ENCODE measurements at regions of chr17 and their contacts with region 1.

Region 1: GRCh38 chr17:56715613-56716357 is 117.9 kb downstream of the C17orf67 start:
- DNase-seq: peak; percentile 87
- ATAC-seq: peak; percentile 92
- H3K4me3 Mint-ChIP-seq: no peak overlapping the region
- H3K27ac Mint-ChIP-seq: no peak overlapping the region
- H3K4me1 Mint-ChIP-seq: peaks cover 28% of the 10 kb centered on the region
- H3K27me3 Mint-ChIP-seq: no peaks in the 10 kb centered on the region
- CTCF ChIP-seq: peak; percentile 88

Region 2: DNA sequence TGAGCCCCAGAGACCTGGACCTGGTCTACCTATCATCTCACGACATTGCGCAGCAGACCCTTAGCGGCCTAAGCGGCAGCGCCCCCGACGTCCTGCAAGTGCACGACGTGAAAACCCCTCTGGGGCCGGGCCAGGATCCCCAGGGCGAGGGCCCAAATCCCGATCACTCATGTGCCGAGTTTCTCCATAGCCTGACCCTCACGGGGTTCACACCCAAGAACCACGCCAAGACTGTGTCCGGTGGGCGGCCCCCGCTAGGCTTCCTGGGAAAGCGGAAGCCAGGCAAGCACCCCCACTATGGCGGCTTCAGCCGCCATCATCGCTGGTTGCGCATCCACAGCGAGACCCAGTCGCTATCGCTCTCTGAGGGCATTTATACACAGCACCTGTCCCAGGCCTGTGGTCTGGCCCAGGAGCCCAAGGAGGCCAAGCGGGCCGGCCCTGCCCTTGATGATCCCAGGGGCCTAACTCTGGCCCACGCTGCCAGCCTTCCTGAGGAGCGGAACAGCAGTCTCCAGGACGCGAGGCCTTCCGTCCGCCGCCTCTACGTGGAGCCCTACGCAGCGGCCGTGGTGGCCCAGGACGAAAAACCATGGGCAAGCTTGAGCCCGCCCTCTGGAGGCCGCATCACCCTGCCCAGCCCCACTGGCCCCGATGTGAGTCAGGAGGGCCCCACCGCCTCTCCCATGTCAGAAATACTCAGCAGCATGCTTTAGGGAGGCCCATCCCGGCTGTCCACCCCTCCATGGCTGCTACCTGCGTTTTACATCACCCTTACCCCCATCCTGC is 205.0 kb before region 1 on chr17:
- CTCF ChIA-PET with region 1: interaction called, 23 read pairs
- POLR2A ChIA-PET with region 1: interaction called, 4 read pairs
- DNase-seq: no peak
- ATAC-seq: peak; percentile 51
- H3K4me3 Mint-ChIP-seq: no peak overlapping the region
- H3K27ac Mint-ChIP-seq: no peak overlapping the region
- H3K4me1 Mint-ChIP-seq: no peaks in the 10 kb centered on the region
- H3K27me3 Mint-ChIP-seq: no peaks in the 10 kb centered on the region
- CTCF ChIP-seq: no peak

Region 3: GRCh38 chr17:56629531-56630075 is 86.2 kb before region 1 on chr17:
- CTCF ChIA-PET with region 1: interaction called, 10 read pairs
- POLR2A ChIA-PET with region 1: no interaction called
- DNase-seq: peak; percentile 62
- ATAC-seq: peak; percentile 99
- H3K4me3 Mint-ChIP-seq: no peak overlapping the region
- H3K27ac Mint-ChIP-seq: no peak overlapping the region
- H3K4me1 Mint-ChIP-seq: peaks cover 12% of the 10 kb centered on the region
- H3K27me3 Mint-ChIP-seq: no peaks in the 10 kb centered on the region; the same call in 1 of the 2 replicates
- CTCF ChIP-seq: no peak

Region 4: DNA sequence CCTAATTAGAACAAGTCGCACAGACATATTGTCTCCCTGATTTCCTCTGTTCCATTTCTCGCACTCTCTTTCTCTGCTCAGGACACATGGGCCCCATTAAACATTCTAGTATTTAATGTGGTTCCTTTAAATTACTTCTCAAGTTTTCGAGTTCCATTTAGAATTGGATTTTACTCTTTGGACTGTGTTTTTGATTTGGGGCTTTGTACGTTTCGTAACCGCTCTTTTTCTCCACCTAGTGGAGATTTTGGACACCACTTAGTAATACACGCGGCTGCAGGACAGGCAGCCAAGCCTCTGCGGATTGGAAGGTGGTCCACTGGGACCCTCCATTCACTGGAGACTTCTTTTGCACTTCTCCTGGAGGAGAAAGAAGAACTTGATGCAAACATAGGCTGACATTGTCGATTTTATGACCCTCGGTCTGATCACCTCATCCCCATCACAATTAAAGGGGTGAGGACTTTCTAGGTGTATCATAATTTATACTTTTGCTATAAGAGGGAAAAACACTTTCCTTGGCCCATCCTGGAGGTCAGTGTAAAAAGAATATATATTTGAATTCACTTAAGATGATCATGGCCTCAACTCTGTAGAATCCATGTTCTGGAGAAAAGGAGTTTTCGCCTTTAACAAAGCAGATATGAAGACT is 36.5 kb before region 1 on chr17:
- CTCF ChIA-PET with region 1: interaction called, 47 read pairs
- POLR2A ChIA-PET with region 1: no interaction called
- DNase-seq: no peak
- ATAC-seq: peak; percentile 75
- H3K4me3 Mint-ChIP-seq: peak overlapping the region; percentile 85
- H3K27ac Mint-ChIP-seq: no peak overlapping the region
- H3K4me1 Mint-ChIP-seq: peaks cover 9% of the 10 kb centered on the region
- H3K27me3 Mint-ChIP-seq: no peaks in the 10 kb centered on the region; the same call in 1 of the 2 replicates
- CTCF ChIP-seq: peak; percentile 41; the same call in 1 of the 2 replicates

Region 5: DNA sequence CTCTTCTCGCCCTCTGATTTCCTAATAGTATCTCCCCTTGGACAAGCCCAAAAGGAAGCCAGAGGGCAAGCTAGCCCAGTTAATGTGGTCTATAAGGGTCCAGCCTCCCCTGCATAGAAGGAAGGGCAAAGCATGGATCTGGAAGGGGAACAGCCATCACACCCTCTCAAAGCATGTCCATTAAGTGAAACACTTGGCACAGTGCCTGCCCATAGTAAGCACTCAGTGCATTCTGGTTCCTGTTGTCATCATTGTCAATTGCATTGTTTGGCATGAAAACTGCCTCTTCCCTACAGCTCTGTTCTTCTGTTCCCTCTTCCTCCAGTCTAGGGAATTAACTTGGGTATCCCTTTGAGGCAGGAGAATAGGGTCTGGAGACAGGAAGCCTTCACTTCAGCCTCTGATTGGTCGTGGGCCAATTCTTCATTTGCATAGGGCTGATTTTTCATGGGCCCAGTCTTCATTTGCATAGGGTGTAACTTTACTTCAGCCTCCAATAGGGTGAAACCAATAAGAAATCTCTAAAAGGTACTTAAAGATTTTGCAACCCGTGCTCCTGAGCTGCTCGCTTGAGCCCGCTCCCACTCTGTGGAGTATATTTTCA is 36.6 kb after region 1 on chr17:
- CTCF ChIA-PET with region 1: interaction called, 12 read pairs
- POLR2A ChIA-PET with region 1: no interaction called
- DNase-seq: no peak
- ATAC-seq: peak; percentile 33
- H3K4me3 Mint-ChIP-seq: no peak overlapping the region
- H3K27ac Mint-ChIP-seq: no peak overlapping the region
- H3K4me1 Mint-ChIP-seq: peaks cover 7% of the 10 kb centered on the region
- H3K27me3 Mint-ChIP-seq: no peaks in the 10 kb centered on the region
- CTCF ChIP-seq: no peak